Dorsolateral prefrontal cortex (tissue), 120 donors: ENCODE measurements at regions of chr13 and their contacts with region 1.

Region 1: DNA sequence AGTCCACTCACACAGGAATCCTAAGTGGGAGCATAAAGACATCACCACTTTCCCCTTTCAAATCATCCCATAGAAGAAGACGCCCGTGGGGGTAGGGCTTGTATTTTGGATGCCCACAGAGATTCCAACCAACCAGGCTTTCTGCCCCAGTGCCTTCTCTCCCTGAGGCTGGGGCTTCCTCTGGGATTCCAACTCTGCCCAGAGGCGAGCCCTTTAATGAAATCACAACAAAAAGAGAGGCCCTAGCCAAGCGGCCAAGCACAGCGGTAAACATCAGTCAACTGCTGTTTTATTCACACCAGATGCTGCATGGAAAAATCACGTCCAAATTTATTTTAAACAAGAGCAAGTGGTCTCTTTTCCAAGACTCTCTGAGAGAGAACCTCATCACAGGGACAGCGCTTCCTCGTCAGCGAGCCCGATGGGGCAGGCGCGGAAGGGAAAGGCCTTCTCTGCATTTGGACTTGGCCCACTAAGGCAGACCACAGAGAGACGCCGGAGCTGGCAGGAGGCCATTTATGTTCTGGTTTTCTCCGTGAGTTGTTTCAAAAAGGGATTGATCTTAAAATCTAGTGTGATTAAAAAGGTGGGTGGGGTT is 31.5 kb downstream of the ADPRHL1 start:
- DNase-seq: no peak
- H3K4me3 ChIP-seq: no peak overlapping the region
- H3K27ac ChIP-seq: no peak overlapping the region
- H3K27me3 ChIP-seq: no peaks in the 10 kb centered on the region
- CTCF ChIP-seq: no peak

Region 2: DNA sequence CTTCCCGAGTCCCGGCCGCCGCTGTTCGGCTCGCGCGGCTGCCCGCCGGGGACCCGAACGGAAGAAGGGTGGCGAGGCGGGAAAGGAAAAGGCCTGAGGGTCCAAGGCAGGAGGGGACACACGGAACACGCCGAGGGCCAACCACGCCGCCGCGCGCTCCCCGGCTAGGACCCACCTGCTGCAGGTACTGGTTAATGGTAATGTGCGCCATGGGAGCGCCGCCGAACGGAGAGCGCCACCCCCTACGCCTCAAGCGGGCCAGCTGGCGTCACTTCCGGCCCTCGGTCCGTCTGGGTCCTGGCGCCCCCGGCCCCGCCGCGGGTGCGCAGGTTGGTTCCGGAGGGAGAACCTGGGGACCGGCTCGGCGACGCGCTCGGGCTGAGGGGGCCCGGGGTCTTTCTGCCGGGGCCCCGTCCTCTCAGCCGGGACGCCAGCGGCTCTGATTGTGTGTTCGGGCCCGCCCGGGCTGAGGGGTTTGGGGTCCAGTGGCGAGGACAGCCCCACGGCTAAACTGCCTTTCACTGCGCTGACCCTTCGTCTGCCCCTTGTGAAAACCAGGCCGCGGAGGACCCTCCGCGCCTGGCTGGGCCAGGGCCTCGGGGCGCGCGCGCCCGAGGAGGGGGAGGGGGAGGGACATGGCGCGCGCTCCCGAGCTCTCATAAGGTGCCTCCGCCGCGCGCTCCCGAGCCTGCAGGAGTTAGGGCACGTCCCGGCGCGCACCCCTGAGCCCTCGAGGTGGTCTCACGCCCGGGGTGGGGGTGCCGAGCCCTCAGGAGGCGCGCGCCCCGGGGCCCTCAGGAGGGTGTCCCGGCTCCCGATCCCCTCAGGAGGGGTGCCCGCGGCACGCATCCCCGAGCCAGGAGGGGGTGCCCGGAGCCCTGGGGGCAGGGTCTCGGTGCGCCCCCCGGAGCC is 213.1 kb before region 1 on chr13 and contains the start of gene PCID2:
- intact Hi-C with region 1: no loop called
- DNase-seq: peak; percentile 75 to 95 (median 85)
- H3K4me3 ChIP-seq: peak within 1 kb of the TSS; percentile 68 to 100 (median 94)
- H3K27ac ChIP-seq: peak within 1 kb of the TSS; percentile 88 to 100 (median 98)
- H3K27me3 ChIP-seq: no peaks in the 10 kb centered on the region
- CTCF ChIP-seq: peak in 47 of 56 donors; percentile 7 to 63 (median 39)
- total RNA-seq, gene PCID2: 32.8 to 106 (median 48.0) TPM

Region 3: GRCh38 chr13:113374511-113375175 is 47.1 kb before region 1 on chr13:
- intact Hi-C with region 1: loop called in 1 of 2 experiments (anchors 5 kb)
- DNase-seq: peak in 4 of 10 donors; percentile 5 to 34 (median 11)
- H3K4me3 ChIP-seq: no peak overlapping the region
- H3K27ac ChIP-seq: no peak overlapping the region
- H3K27me3 ChIP-seq: no peaks in the 10 kb centered on the region
- CTCF ChIP-seq: no peak